Activated CD8-positive, alpha-beta T cell treated with anti-CD3 and anti-CD28 coated beads for 36 hours (primary cell): ENCODE measurements at regions of chr1 and their contacts with region 1.

Region 1: DNA sequence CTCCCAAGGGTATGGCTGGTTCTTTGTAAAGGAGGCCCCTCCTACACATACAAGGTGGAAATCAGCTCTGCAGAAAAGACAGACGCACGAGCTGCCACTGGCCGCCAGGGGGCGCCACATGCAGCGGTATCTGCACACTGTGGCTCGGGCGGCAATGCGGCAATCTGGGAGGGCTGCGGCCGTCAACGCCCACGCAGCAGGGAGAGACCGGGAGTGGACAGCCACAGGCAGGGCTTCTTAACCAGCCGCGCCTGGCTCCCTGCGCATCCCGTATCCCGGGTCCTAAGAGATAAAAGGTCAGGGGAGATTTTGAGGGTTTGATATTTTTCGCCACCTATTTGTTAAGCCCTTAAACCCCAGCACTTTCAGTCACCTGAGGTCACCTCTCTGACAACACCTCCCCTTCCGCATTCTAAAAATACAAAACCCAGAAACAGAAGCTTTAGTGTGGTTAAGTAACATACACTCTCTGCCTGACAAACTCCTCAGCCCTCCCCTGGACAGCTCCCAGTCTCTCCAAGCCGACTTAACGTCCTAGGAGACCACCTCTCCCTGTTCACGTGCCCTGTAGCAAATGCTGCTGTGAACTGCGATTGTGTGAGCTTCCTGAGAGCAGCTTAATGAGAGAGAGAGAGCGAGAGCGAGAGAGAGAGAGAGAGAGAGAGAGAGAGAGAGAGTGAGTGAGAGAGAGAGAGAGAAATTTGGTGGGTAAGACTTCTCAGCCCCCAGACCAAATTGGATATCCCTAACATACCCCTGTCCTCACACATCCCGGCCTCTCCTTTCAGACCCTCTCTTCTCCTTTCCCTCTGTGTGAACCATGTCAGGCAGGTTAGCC is 13.5 kb upstream of the KCNA2 start:
- DNase-seq: peak; percentile 91
- ATAC-seq: peak; percentile 90
- H3K4me3 Mint-ChIP-seq: peak overlapping the region; percentile 76
- H3K27ac Mint-ChIP-seq: peak overlapping the region; percentile 77
- H3K4me1 Mint-ChIP-seq: peaks cover 27% of the 10 kb centered on the region
- H3K27me3 Mint-ChIP-seq: no peaks in the 10 kb centered on the region
- CTCF ChIP-seq: peak; percentile 94

Region 2: GRCh38 chr1:110433803-110434202 is 185.8 kb before region 1 on chr1:
- CTCF ChIA-PET with region 1: no interaction called
- POLR2A ChIA-PET with region 1: no interaction called
- intact Hi-C with region 1: no loop called
- DNase-seq: peak; percentile 4
- ATAC-seq: no peak
- H3K4me3 Mint-ChIP-seq: no peak overlapping the region
- H3K27ac Mint-ChIP-seq: no peak overlapping the region
- H3K4me1 Mint-ChIP-seq: no peaks in the 10 kb centered on the region
- H3K27me3 Mint-ChIP-seq: peaks cover 4% of the 10 kb centered on the region
- CTCF ChIP-seq: no peak

Region 3: DNA sequence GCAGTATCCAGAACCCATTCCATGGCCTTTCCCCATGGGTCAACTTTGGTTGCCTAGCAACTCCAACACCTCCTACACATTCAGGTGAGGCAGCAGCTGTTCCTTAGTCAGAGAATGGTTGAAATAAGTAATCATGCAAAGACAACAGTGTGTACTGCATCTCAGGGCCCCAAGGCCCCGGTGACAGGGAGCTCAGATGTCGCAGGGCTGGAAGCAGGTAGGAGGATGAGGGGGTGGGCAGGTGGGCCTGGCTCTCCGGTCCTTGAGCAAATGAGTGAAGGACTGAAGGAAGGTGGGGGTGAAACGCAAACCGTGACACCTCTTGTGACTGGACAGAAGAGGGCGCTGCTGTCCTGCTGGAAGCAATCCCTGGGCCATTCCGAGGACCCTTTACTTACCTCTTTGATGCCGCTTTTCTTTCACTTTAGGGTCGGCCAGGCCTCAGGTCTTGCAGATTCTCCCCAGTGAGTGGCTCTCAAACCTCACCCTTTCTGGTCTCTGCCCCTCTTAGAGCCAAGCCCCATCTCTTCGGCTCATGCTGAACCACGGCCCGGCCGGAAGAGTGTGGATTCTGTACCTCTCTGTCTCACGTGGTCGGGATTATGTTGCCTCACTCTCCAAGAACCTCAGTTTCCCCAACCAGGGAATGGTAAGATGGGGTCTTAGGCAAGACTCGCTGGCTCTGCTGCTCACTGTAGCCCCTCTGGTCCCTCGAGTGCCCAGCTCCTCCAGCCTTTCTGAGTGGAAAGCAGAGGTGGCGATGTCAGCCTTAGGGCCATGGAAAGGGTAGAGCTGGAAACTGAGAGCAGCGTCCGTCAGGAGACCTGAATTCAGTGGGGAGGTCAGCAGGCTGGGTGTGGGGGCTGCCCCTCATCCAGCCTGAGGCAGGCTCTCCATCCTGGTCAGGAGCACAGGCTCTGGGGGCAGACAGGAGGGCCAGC is 95.0 kb before region 1 on chr1:
- CTCF ChIA-PET with region 1: interaction called, 20 read pairs
- POLR2A ChIA-PET with region 1: interaction called, 4 read pairs
- intact Hi-C with region 1: loop called (anchors 2 kb)
- DNase-seq: peak; percentile 69
- ATAC-seq: peak; percentile 92
- H3K4me3 Mint-ChIP-seq: no peak overlapping the region
- H3K27ac Mint-ChIP-seq: no peak overlapping the region
- H3K4me1 Mint-ChIP-seq: no peaks in the 10 kb centered on the region
- H3K27me3 Mint-ChIP-seq: peaks cover 10% of the 10 kb centered on the region
- CTCF ChIP-seq: peak; percentile 89

Region 4: DNA sequence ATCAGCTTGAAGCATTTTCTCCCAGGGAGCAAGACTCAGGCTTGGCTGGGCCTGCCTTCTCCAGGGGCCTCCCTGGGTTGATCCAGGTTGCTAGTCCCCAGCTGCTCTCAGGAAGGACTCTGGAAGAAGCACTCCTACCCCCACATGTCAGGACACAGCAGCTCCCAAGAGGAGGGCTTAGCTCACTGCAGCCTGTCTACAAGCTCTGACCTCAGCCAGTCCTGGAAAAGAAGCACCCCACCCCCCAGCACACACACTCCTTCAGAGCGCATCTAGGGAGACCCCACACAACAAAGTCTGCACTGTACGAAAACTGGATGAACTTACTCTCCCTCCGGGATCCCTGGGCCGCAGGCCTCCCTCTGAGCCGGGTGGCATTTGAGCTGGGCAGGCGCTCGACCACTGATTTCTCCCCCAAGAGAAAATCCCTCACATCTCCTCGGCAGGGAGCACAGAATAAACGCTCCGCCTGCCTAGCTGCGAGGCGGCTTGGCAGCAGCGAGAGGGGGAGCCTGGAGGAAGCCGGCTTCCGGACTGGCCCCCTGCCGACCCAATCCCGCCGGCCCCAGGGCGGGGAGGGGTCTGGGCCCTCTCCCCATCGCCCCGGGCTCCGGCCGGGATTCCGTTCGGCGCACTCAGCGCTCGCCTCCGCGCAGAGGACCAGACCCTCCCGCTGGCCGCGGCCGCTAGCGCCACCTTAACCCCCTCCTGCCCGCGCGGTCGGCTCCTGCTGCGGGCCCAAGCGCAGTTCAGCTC is 13.6 kb before region 1 on chr1 and contains the start of gene KCNA2:
- CTCF ChIA-PET with region 1: interaction called, 19 read pairs
- POLR2A ChIA-PET with region 1: interaction called, 3 read pairs
- intact Hi-C with region 1: no loop called
- DNase-seq: no peak
- ATAC-seq: peak; percentile 40
- H3K4me3 Mint-ChIP-seq: peak within 1 kb of the TSS; percentile 68
- H3K27ac Mint-ChIP-seq: no peak within 1 kb of the TSS
- H3K4me1 Mint-ChIP-seq: peaks cover 5% of the 10 kb centered on the region
- H3K27me3 Mint-ChIP-seq: peaks cover 44% of the 10 kb centered on the region
- CTCF ChIP-seq: no peak
- total RNA-seq, gene KCNA2: 0.02 to 0.14 TPM

Region 5: DNA sequence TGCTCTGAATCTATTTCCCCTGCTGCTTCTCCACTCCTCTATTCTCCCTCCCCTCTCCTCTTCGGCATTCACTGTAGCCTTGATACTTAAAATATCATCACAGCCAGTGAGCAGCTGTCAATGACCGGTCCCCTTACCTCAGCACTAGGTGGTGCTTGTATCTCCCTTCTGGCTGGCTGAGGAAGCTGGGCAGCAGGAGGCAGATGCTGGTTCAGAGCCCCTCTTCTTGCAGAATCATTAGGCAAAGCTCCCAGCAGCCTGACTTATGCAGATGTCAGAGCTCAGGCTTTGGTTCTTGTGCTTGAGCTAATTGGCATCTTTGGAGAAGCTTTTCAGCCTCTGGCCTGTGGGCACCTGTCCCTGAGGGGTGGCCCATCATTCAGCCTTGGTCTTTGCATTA is 18.4 kb after region 1 on chr1:
- CTCF ChIA-PET with region 1: interaction called, 13 read pairs
- POLR2A ChIA-PET with region 1: interaction called, 9 read pairs
- intact Hi-C with region 1: no loop called
- DNase-seq: no peak
- ATAC-seq: no peak
- H3K4me3 Mint-ChIP-seq: no peak overlapping the region
- H3K27ac Mint-ChIP-seq: no peak overlapping the region
- H3K4me1 Mint-ChIP-seq: peaks cover 90% of the 10 kb centered on the region
- H3K27me3 Mint-ChIP-seq: no peaks in the 10 kb centered on the region
- CTCF ChIP-seq: no peak

Region 6: GRCh38 chr1:110674337-110675059 is 54.9 kb after region 1 on chr1 and contains the start of gene KCNA3:
- CTCF ChIA-PET with region 1: interaction called, 20 read pairs
- POLR2A ChIA-PET with region 1: interaction called, 8 read pairs
- intact Hi-C with region 1: no loop called
- DNase-seq: peak; percentile 74
- ATAC-seq: peak; percentile 28
- H3K4me3 Mint-ChIP-seq: peak within 1 kb of the TSS; percentile 100
- H3K27ac Mint-ChIP-seq: peak within 1 kb of the TSS; percentile 98
- H3K4me1 Mint-ChIP-seq: peaks cover 30% of the 10 kb centered on the region
- H3K27me3 Mint-ChIP-seq: no peaks in the 10 kb centered on the region
- CTCF ChIP-seq: peak; percentile 47
- total RNA-seq, gene KCNA3: 15.5 to 16.2 TPM